A549 (cell line): ENCODE measurements at regions of chrX and their contacts with region 1.

Region 1: DNA sequence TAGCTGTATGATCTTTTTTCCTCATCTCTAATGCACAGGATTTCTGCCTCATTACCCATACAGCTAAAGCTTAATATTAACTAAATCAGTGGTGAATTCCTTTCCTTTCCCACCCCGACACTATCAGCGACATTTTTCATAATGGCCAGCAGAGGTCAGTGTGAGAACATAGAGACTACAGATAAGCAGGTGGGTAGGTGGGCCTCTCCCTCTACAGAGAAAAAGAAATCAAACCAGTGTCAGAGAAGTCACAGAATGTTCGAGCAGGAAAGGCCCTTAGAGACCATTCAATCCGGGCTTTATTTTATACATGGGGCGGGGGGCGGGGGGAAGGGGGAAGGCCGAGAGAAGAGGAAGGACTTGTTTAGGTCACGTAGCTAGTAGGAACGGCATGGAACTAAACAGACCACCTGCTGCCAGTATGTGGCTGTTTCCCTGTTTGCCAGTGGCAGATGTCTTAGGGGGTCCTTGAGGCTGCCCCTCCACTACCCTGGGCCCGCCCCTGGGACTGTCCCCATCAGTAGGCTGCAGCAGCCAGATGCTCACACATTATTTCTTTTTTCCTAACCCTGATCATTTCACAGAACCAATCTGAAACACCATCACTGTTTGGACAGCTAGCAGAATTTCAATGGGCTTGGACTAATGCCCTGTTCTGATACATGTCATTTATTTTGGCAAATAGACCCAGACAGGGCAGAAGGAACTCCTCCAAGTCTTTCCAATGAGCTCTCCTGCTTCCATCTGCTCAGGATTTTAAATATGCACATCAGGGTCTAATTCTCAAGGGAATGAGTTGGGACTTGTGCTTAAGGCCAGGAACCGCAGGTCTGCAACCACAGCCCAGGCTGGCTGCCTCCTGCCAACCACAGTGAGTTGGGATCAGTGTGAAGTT is 133.4 kb downstream of the ATG4A start:
- DNase-seq: peak; percentile 30 to 38
- ATAC-seq: peak; percentile 62 to 77; a peak in 3 of 6 replicates
- H3K4me3 ChIP-seq: no peak overlapping the region
- H3K27ac ChIP-seq: peak overlapping the region; percentile 39 to 62
- H3K4me1 ChIP-seq: peaks cover 9% of the 10 kb centered on the region; the same call in 2 of the 3 replicates
- CTCF ChIP-seq: peak; percentile 70
- EP300 ChIP-seq: no peak
- POLR2A ChIP-seq: no peak
- RAD21 ChIP-seq: peak; percentile 82 to 84

Region 2: GRCh38 chrX:108156082-108156481 is 68.9 kb before region 1 on chrX:
- CTCF ChIA-PET with region 1: no interaction called
- POLR2A ChIA-PET with region 1: no interaction called
- DNase-seq: no peak
- ATAC-seq: no peak
- H3K4me3 ChIP-seq: no peak overlapping the region
- H3K27ac ChIP-seq: no peak overlapping the region
- H3K4me1 ChIP-seq: no peaks in the 10 kb centered on the region
- CTCF ChIP-seq: no peak
- EP300 ChIP-seq: no peak
- POLR2A ChIP-seq: no peak
- RAD21 ChIP-seq: no peak

Region 3: GRCh38 chrX:108245459-108245858 is 20.5 kb after region 1 on chrX:
- CTCF ChIA-PET with region 1: interaction called, 13 read pairs
- POLR2A ChIA-PET with region 1: no interaction called
- DNase-seq: peak in 1 of 2 experiments; percentile 2
- ATAC-seq: peak in 1 of 2 experiments; percentile 51; a peak in 2 of 6 replicates
- H3K4me3 ChIP-seq: no peak overlapping the region
- H3K27ac ChIP-seq: no peak overlapping the region
- H3K4me1 ChIP-seq: no peaks in the 10 kb centered on the region
- CTCF ChIP-seq: peak; percentile 25; the same call in 1 of the 3 replicates
- EP300 ChIP-seq: no peak
- POLR2A ChIP-seq: no peak
- RAD21 ChIP-seq: peak in 1 of 2 experiments; percentile 28; a peak in 1 of 5 replicates

Region 4: DNA sequence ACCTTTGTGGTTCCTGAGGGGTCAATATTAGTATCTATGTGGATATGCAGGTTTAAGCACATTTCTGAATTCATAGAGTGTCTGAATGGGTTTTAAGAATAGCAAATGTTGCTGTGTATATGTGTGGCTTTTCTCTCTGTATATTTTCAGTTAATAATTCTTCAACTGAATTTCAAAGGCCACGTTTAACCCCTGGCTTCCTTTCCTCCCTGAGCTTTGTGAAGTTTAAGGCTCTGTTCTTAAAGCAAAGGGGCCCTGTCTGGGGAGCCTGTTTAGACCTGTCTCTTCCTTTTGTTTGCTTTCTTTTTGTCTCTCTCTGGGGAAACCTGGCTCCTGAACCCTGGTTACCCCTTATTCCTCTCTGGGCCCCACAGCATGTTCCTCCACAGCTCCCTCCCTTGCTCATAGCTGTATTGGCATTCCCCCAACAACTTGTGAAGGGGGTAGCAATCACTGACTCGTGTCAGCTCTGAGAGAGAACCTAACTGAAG is 74.2 kb after region 1 on chrX:
- CTCF ChIA-PET with region 1: interaction called, 28 read pairs
- POLR2A ChIA-PET with region 1: no interaction called
- DNase-seq: peak in 1 of 2 experiments; percentile 24
- ATAC-seq: peak in 1 of 2 experiments; percentile 56; a peak in 3 of 6 replicates
- H3K4me3 ChIP-seq: no peak overlapping the region
- H3K27ac ChIP-seq: peak overlapping the region; percentile 67 to 82
- H3K4me1 ChIP-seq: peaks cover 25% of the 10 kb centered on the region
- CTCF ChIP-seq: no peak
- EP300 ChIP-seq: no peak
- POLR2A ChIP-seq: no peak
- RAD21 ChIP-seq: no peak

Region 5: DNA sequence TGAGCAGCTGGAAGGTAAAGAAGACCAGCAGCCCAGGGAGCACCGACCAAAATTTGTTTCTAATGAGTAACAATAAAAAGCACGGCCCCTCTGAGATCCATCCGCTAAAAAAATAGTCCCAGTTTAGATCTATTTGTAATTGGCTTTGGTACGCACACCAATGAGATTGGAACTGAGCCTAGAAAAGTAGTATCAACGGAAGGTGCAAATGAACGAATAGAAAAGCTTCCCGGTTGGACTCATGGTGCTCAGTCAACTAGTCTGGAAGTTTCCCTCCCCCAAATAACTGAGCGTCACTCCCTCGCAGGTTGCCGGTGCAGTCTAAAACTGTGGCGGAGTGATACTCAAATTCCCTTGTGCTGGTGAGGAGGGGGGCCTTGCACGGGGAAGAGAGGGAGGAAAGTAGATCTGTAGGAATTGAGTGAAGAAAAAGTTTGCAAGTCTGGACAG is 214.5 kb after region 1 on chrX and contains the start of gene COL4A5:
- CTCF ChIA-PET with region 1: interaction called, 15 read pairs
- POLR2A ChIA-PET with region 1: no interaction called
- DNase-seq: peak; percentile 74 to 95
- ATAC-seq: peak; percentile 87 to 91
- H3K4me3 ChIP-seq: peak within 1 kb of the TSS; percentile 90
- H3K27ac ChIP-seq: peak within 1 kb of the TSS; percentile 97
- H3K4me1 ChIP-seq: peaks cover 9% of the 10 kb centered on the region; the same call in 2 of the 3 replicates
- CTCF ChIP-seq: no peak
- EP300 ChIP-seq: no peak
- POLR2A ChIP-seq: no peak; the same call in 1 of the 2 replicates
- RAD21 ChIP-seq: no peak; a peak in 1 of 5 replicates
- polyA plus RNA-seq, gene COL4A5: 48.6 and 67.8 TPM in 2 replicates